ENCODE measurements at regions of chr10 and their contacts with region 1.

Region 1: DNA sequence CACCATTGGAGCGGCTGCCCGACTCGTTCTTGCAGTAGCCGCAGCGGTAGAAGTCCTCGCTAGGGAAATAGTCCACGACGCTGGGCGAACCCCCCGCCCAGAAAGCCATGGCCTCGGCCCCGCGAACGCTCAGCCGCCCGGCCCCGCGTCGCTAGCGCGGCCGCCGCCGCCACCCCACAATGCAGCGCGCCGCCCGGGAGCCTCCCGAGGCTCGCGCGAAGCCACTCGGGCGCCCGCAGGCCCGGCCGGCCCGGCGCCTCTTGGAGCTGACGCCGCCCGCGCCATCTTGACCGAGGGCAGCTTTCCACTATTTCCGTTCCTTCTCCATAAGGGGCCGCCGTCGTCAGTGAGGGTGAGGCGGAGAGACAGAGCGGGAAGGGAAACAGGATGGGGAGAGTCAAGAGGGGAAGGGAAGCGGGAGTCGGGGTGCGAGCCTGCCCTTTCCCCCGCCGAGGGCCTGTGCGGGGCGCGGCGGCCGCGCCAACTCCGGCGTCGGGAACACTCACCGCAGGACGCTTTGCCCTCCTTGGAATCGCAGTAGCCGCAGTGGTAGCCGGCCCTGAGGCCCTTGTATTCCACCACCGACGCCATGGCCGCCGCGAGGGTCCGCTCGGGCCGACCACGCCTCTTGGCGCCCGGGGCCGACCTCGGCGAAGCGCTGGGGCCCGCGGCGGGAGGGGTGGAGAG is at the start of gene ATE1:
- DNase-seq: peak; percentile 93
- H3K4me3 ChIP-seq: peak within 1 kb of the TSS; percentile 80 to 98 (median 93)
- H3K27ac ChIP-seq: peak within 1 kb of the TSS; percentile 90
- H3K4me1 ChIP-seq: peaks cover 14% of the 10 kb centered on the region
- H3K27me3 ChIP-seq: no peaks in the 10 kb centered on the region
- CTCF ChIP-seq: peak in 1 of 2 donors; percentile 16
- total RNA-seq, gene ATE1: 22.0 to 23.9 TPM

Region 2: DNA sequence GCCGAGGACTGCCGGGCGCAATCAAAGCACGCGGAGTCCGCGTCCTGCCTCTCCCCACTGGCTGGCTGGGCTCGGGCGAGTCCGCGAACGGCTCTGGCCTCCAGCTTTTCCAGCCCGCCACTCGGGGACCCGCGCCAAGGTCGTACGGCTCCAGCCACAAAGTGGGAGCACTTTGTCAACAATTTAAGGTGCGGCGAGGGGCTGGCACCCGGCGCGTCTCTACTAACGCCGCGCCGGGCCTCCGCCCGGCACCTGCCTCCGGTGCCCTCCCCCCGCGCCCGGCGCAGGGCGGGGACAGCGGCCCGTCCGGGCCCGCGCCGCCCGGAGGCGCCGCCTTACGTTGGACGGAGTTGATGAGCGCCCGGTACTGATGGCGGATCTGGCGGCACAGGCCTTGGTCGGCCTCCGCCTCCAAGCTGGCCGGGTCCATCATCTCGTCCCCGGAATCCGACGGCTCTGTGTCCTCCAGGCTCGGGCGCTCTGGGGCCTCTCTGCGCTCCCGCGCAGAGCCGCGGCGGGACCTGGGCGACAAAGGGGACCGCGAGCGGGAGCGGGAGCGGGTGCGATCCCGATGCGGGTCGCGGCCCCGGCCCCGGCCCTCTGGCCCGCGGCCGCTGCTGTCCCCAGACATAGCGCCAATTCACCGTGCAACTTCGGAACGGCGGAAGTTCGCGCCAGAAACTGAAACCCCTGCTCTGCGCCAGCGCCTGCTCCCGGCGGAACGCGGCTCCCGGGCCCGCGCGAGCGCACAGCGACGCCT is 46.7 kb after region 1 on chr10 and contains the start of gene NSMCE4A:
- CTCF ChIA-PET with region 1: interaction called, 4 read pairs
- dilution Hi-C with region 1: no loop called
- in situ Hi-C with region 1: no loop called
- intact Hi-C with region 1: loop called (anchors 1 kb)
- DNase-seq: peak; percentile 66
- H3K4me3 ChIP-seq: peak within 1 kb of the TSS; percentile 61 to 72 (median 62)
- H3K27ac ChIP-seq: peak within 1 kb of the TSS; percentile 65
- H3K4me1 ChIP-seq: peaks cover 10% of the 10 kb centered on the region
- H3K27me3 ChIP-seq: no peaks in the 10 kb centered on the region
- CTCF ChIP-seq: peak; percentile 47 to 64
- total RNA-seq, gene NSMCE4A: 14.5 to 28.6 TPM